Activated B cell treated with CpG ODN at 0.5 μM for 24 hours (primary cell): ENCODE measurements at regions of chr15 and their contacts with region 1.

Region 1: DNA sequence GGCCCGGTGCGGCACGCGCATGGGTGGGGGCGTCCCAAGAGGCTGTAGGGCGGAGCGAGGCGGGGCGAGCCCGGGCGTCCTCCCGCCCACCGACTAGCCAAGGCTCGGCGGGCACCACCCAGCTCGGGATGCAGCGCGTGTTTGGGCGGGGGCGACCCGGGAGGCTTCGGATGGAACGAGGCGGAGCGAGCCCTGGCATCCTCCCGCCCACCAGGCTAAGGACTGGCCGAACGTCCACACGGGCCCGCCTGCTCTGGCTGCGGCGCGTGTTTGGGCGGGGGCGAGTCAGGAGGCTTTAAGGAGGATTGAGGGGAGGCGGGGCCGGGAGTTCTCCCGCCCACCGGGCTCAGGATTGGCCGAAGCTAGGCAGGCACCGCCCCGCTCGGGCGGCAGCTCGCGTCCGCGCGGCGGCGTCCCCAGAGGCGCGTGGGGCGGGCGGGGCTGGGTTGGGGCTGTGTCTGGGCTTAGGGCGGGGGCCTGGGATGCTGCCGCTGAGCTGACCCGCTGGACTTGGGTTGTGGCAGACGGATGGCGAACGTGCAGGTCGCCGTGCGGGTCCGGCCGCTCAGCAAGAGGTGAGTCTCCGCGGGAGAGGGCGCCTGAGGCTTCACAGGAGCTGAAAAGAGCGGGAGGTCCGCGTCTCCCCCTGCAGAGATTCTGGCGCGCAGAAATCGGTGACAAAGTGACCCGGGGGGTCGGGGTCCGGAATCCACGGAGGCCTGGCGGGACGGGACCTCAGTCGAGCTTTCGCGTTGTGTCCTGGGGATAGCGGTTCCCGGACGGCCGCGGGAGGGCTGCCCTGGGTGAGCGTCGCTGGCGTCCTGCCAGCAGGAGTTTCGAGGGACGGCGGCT is at the start of gene STARD9:
- DNase-seq: peak; percentile 98
- ATAC-seq: peak; percentile 85
- H3K4me3 Mint-ChIP-seq: peak within 1 kb of the TSS; percentile 96
- H3K27ac Mint-ChIP-seq: peak within 1 kb of the TSS; percentile 83
- H3K4me1 Mint-ChIP-seq: peaks cover 21% of the 10 kb centered on the region
- H3K27me3 Mint-ChIP-seq: no peaks in the 10 kb centered on the region
- CTCF ChIP-seq: no peak
- total RNA-seq, gene STARD9: 5.5 and 7.1 TPM in 2 replicates

Region 2: DNA sequence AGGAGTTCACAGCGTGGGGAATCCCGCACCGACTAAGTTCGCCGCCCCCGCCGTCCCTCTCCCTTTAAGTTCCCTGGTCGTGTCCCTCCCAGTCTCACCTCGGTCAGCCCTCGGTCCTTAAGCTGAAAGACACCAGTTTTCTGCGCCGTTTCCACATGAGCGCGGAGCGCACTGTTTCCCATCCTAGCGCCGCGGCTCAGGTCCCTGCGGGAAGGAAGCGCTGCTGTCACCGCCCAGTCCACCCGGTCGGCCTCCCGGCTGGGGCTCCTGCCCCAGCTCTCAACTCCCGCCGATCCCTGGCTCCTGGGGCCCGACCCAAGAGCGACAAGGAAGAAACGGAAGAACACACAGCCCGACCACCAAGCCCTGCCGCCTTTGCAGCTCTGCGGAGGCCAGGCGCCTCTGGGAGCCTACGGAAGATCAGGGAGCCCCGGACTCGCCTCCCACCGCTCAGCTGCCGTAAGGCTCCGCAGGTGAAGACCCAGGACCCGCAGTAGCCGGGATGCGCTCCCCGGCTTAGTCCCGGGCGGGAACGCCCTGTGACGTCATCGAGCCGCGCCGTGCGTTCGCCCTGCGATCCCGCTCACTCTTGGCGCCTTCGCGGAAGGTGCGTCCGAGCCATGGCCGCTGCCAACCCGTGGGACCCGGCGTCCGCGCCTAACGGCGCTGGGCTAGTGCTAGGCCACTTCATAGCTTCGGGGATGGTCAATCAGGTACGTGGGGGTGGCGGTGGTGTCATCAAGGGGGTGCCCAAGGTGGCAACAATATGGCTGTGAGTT is 27.0 kb before region 1 on chr15 and contains the starts of genes HAUS2 and LRRC57:
- CTCF ChIA-PET with region 1: no interaction called
- POLR2A ChIA-PET with region 1: interaction called, 9 read pairs
- intact Hi-C with region 1: loop called (anchors 1 kb)
- DNase-seq: peak; percentile 88
- ATAC-seq: peak; percentile 86
- H3K4me3 Mint-ChIP-seq: peak within 1 kb of the TSS; percentile 96
- H3K27ac Mint-ChIP-seq: peak within 1 kb of the TSS; percentile 93
- H3K4me1 Mint-ChIP-seq: peaks cover 36% of the 10 kb centered on the region
- H3K27me3 Mint-ChIP-seq: no peaks in the 10 kb centered on the region
- CTCF ChIP-seq: no peak
- total RNA-seq, gene HAUS2: 18.2 and 20.8 TPM in 2 replicates
- total RNA-seq, gene LRRC57: 16.1 and 21.4 TPM in 2 replicates